ENCODE measurements at regions of chr7 and their contacts with region 1.

Region 1: DNA sequence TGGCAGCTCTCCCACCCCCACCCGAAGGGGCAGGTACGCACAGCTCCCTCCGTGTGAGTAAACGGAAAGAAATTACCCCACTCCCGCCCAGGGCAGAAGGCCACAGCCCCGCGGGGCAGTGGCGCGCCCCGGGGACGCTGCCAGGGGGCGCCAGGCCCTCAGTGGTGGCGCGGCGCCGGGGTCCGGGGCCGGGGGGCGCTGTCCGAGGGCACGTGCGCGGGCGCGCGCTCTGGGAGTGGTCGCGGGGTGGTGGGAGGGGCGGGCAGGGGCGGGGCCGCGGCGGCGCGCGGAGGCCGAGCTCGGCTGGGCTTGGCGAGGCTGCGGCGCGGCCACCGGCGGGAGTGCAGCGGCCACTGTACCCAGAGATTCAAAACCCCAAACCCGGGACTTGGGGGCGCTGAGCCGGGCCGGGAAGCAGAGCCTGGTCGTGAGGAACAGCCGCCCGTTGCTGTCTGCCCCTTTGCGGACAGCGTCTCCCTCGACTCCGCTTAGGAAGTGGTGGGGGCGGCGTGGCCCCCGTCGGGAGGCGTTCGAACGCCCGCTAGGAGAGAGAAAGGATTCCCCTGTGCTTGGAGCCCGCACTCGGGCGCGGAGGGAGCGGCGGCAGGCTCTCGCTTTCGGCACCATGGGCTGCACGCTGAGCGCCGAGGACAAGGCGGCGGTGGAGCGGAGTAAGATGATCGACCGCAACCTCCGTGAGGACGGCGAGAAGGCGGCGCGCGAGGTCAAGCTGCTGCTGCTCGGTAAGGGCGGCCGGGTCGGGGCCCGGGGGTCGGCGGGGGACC is at the start of gene GNAI1:
- DNase-seq: peak; percentile 81
- ATAC-seq: peak; percentile 68
- H3K4me3 ChIP-seq: peak within 1 kb of the TSS; percentile 99
- H3K27ac ChIP-seq: peak within 1 kb of the TSS; percentile 48
- H3K4me1 ChIP-seq: peaks cover 23% of the 10 kb centered on the region
- H3K27me3 ChIP-seq: no peaks in the 10 kb centered on the region
- CTCF ChIP-seq: peak; percentile 43
- total RNA-seq, gene GNAI1: 16.9 and 19.6 TPM in 2 replicates

Region 2: GRCh38 chr7:80060218-80060806 is 74.4 kb before region 1 on chr7:
- CTCF ChIA-PET with region 1: interaction called, 3 read pairs
- POLR2A ChIA-PET with region 1: no interaction called
- intact Hi-C with region 1: loop called (anchors 2 kb)
- DNase-seq: peak; percentile 80
- ATAC-seq: peak; percentile 35; the same call in 1 of the 2 replicates
- H3K4me3 ChIP-seq: no peak overlapping the region
- H3K27ac ChIP-seq: no peak overlapping the region
- H3K4me1 ChIP-seq: no peaks in the 10 kb centered on the region
- H3K27me3 ChIP-seq: no peaks in the 10 kb centered on the region
- CTCF ChIP-seq: peak; percentile 68

Region 3: DNA sequence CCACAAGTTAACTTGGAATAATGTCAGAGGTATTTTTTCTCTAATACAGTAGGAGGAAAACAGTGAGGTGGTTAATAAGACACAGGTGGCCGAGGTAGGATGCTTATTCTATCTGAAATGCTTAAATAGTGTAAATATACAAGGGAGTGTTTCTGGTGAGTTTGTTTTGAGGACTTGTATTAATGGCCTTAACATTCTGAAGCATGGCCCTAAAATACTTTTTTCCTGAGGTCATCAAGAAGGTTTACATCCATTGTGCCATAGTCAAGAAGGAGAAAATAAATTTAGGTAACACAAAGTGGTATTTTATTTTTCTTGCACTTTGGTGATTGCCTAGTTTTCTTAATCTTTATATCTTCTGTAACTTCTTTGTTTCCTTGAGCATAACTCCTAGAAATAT is 18.7 kb after region 1 on chr7:
- CTCF ChIA-PET with region 1: interaction called, 3 read pairs
- POLR2A ChIA-PET with region 1: no interaction called
- intact Hi-C with region 1: loop called (anchors 2 kb)
- DNase-seq: no peak
- ATAC-seq: no peak
- H3K4me3 ChIP-seq: no peak overlapping the region
- H3K27ac ChIP-seq: no peak overlapping the region
- H3K4me1 ChIP-seq: peaks cover 11% of the 10 kb centered on the region
- H3K27me3 ChIP-seq: no peaks in the 10 kb centered on the region
- CTCF ChIP-seq: no peak

Region 4: DNA sequence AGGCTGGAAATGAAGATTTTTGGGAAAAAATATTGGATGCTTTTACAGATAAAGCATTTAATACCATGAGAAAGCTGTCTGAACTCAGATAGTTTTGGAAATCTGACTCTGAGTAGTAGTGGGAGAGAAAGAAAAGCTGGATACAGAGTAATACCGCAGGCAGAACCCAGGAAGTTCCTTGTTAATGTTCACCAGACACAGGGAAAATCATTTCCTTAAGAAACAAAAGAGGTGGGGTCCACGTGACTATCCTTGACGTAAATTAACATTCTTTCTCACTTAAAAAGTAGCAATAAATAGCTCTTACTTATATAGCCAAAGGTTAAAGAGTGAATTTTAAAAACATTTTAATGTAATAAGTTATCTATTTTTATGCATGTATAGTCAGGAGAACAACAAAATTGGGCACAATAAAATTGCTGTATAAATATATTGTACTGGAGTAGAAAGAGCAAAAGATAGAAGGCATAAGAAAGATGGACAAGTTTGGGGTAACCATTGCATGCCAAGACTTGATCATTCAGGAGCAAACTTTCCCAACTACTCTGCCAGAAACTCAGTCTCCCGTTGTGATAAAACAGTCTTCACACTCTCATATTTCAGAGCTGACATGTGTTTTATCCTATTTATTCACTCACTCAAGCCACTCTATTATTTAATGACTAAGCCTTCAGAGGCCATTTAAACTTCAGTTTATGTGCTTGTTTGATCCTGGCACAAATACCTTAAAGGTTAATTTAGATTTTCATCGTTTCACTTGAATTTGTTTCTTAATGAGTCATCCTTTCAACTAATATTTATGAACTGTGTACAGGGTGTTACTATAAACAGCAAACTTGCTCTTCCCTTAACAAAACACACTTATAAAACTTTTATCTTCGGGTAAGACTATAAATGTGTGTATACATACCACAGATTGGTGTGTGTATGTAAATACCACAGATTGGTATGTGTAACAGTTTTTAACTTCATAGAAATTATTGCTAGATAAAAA is 143.0 kb after region 1 on chr7:
- CTCF ChIA-PET with region 1: interaction called, 4 read pairs
- POLR2A ChIA-PET with region 1: interaction called, 5 read pairs
- intact Hi-C with region 1: loop called (anchors 1 kb)
- DNase-seq: peak; percentile 77
- ATAC-seq: peak; percentile 95
- H3K4me3 ChIP-seq: no peak overlapping the region; the same call in 1 of the 2 replicates
- H3K27ac ChIP-seq: peak overlapping the region; percentile 73
- H3K4me1 ChIP-seq: peaks cover 19% of the 10 kb centered on the region
- H3K27me3 ChIP-seq: no peaks in the 10 kb centered on the region
- CTCF ChIP-seq: no peak

Region 5: DNA sequence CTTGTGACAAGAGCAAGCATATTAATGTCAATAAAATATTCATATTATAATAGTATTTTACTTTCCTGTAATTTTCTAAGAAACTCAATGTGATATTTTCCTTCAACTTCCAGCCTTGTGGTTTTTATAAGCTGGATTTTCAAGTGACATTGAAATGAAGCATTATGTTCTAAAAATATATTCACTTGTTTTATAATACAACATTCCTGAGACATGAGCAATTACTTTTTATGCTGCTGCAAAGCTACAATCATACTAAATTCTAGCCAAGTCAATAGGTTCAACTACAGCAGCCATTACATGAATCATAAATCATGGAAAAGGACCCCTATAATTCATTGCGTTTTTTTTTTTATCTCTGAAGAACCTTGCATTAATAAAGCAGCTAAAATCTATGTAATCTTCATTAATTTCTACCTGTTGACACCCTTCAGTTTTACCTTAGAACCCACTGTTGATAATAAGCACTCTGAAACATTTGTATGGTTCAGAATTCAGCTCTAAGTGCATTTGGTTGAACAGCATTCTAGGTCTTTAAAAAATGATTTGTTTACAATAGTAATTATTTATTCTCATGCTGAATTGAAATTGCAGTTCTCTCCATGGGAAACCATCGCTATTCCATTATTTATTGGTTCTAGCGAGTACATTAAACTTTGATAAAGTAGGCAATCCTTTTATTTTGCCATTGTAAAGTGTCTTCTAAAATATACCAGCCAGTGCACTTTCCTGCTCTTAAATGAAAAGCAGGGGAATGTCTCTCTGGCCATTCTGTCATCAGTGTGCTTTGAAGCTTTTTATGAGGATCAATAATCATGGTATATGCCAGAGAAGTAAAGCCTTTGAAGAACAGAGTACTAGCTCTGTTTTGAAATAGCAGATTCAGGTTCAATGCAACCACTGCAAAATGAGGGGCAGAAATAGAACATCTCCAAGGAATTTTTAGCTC is 244.6 kb after region 1 on chr7:
- CTCF ChIA-PET with region 1: no interaction called
- POLR2A ChIA-PET with region 1: no interaction called
- intact Hi-C with region 1: loop called (anchors 5 kb)
- DNase-seq: peak; percentile 77
- ATAC-seq: peak; percentile 83
- H3K4me3 ChIP-seq: no peak overlapping the region
- H3K27ac ChIP-seq: peak overlapping the region; percentile 56
- H3K4me1 ChIP-seq: peaks cover 33% of the 10 kb centered on the region
- H3K27me3 ChIP-seq: no peaks in the 10 kb centered on the region
- CTCF ChIP-seq: no peak

Region 6: DNA sequence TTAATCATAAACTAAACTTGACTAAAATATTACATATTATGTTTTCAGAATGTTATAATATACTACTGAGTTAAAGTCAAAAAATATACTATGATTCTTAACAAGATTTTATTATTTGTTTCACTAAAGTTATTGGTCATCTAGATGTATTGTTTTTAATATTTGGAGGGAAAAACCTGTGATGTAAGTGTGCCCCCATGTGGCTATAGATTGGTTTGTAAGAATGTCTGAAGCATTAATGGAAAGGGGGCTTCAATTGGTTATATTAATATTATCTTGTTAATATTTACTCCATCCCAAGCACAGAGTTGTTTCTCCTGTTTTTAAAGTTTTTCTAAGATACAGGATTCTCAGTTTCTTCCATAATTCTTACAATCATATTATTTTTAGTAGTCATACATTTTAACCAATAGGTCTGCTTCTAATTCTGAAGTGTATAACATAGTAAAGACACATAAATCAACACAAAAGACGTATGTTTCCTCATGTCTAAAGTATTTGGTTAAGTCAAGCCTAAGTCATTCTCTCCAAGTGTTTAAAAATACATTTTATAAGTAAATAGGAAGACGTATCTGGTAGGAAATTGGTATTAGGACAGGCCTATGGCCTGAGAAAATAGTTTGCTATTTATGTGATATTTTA is 319.1 kb after region 1 on chr7:
- CTCF ChIA-PET with region 1: interaction called, 3 read pairs
- POLR2A ChIA-PET with region 1: no interaction called
- intact Hi-C with region 1: loop called (anchors 1 kb)
- DNase-seq: peak; percentile 57
- ATAC-seq: 0 out of 2 replicates have a peak, but pooled peaks have one; percentile 29
- H3K4me3 ChIP-seq: no peak overlapping the region
- H3K27ac ChIP-seq: no peak overlapping the region
- H3K4me1 ChIP-seq: peaks cover 10% of the 10 kb centered on the region
- H3K27me3 ChIP-seq: no peaks in the 10 kb centered on the region
- CTCF ChIP-seq: peak; percentile 76

Region 7: GRCh38 chr7:80467069-80467468 is 332.3 kb after region 1 on chr7:
- CTCF ChIA-PET with region 1: no interaction called
- POLR2A ChIA-PET with region 1: no interaction called
- intact Hi-C with region 1: no loop called
- DNase-seq: peak; percentile 88
- ATAC-seq: peak; percentile 94
- H3K4me3 ChIP-seq: 0 out of 2 replicates have a peak overlapping the region, but pooled peaks have one; percentile 6
- H3K27ac ChIP-seq: peak overlapping the region; percentile 75
- H3K4me1 ChIP-seq: peaks cover 36% of the 10 kb centered on the region
- H3K27me3 ChIP-seq: no peaks in the 10 kb centered on the region
- CTCF ChIP-seq: no peak